Gastrocnemius medialis (tissue), 4 donors: ENCODE measurements at regions of chr6 and their contacts with region 1.

Region 1: GRCh38 chr6:31795616-31796298 is at the start of gene VARS1:
- DNase-seq: peak; percentile 86 to 89
- ATAC-seq: peak; percentile 86 to 92
- H3K4me3 ChIP-seq: peak within 1 kb of the TSS; percentile 64 to 99 (median 82)
- H3K27ac ChIP-seq: peak within 1 kb of the TSS; percentile 85 to 97 (median 93)
- H3K4me1 ChIP-seq: peaks cover 24 to 26% of the 10 kb centered on the region in 2 donors
- H3K27me3 ChIP-seq: no peaks in the 10 kb centered on the region
- CTCF ChIP-seq: peak; percentile 86 to 97 (median 95)
- POLR2A ChIP-seq: peak; percentile 79 to 89
- total RNA-seq, gene VARS1: 39.2 to 102 (median 67.4) TPM

Region 2: DNA sequence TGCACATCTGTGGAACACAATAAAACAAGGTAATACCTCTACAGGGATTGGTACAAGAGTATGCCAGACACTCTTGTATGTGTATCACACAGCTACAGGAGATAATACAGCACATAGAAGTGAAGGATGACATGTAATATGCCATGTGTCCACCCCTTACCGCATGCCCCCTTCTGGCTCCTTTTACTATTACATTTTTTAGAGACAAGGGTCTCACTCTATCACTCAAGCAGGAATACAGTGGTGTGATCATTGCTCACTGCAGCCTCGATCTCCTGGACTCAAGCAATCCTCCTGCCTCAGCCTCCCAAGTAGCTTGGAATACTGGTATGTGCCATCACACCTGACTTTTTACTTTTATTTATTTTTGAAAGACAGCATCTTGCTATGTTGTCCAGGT is 198.8 kb before region 1 on chr6:
- in situ Hi-C with region 1: no loop called
- intact Hi-C with region 1: no loop called
- DNase-seq: no peak
- ATAC-seq: no peak
- H3K4me3 ChIP-seq: no peak overlapping the region
- H3K27ac ChIP-seq: no peak overlapping the region
- H3K4me1 ChIP-seq: no peaks in the 10 kb centered on the region
- H3K27me3 ChIP-seq: no peaks in the 10 kb centered on the region
- CTCF ChIP-seq: peak in 2 of 5 experiments; percentile 18 to 44
- POLR2A ChIP-seq: no peak

Region 3: GRCh38 chr6:31739639-31740396 is 55.9 kb before region 1 on chr6 and contains the start of gene MSH5:
- in situ Hi-C with region 1: no loop called
- intact Hi-C with region 1: loop called (anchors 2 kb)
- DNase-seq: peak; percentile 99
- ATAC-seq: peak; percentile 99
- H3K4me3 ChIP-seq: peak within 1 kb of the TSS; percentile 62 to 79 (median 73)
- H3K27ac ChIP-seq: peak within 1 kb of the TSS; percentile 47 to 68 (median 63)
- H3K4me1 ChIP-seq: peaks cover 12 to 21% of the 10 kb centered on the region in 2 donors
- H3K27me3 ChIP-seq: peaks cover 0 to 9% (median 5%) of the 10 kb centered on the region in 3 donors
- CTCF ChIP-seq: no peak
- POLR2A ChIP-seq: peak; percentile 31 to 52
- total RNA-seq, gene MSH5: 0.35 to 7.8 (median 1.6) TPM

Region 4: GRCh38 chr6:31806465-31807272 is 10.9 kb after region 1 on chr6 and contains the start of gene LSM2:
- in situ Hi-C with region 1: no loop called
- intact Hi-C with region 1: loop called (anchors 1 kb)
- DNase-seq: peak; percentile 98
- ATAC-seq: peak; percentile 97 to 99
- H3K4me3 ChIP-seq: peak within 1 kb of the TSS; percentile 61 to 87 (median 78)
- H3K27ac ChIP-seq: peak within 1 kb of the TSS; percentile 90 to 99 (median 95)
- H3K4me1 ChIP-seq: peaks cover 9 to 12% of the 10 kb centered on the region in 2 donors
- H3K27me3 ChIP-seq: no peaks in the 10 kb centered on the region
- CTCF ChIP-seq: peak in 3 of 5 experiments; percentile 11 to 30 (median 20)
- POLR2A ChIP-seq: peak; percentile 90 to 93
- total RNA-seq, gene LSM2: 25.1 to 43.7 (median 32.9) TPM

Region 5: GRCh38 chr6:32058511-32058963 is 262.8 kb after region 1 on chr6:
- in situ Hi-C with region 1: no loop called
- intact Hi-C with region 1: no loop called
- DNase-seq: no peak
- ATAC-seq: no peak
- H3K4me3 ChIP-seq: no peak overlapping the region
- H3K27ac ChIP-seq: no peak overlapping the region
- H3K4me1 ChIP-seq: no peaks in the 10 kb centered on the region
- H3K27me3 ChIP-seq: no peaks in the 10 kb centered on the region
- CTCF ChIP-seq: no peak
- POLR2A ChIP-seq: no peak